ENCODE measurements at regions of chr5 and their contacts with region 1.

Region 1: GRCh38 chr5:128074171-128074570 is 9.4 kb upstream of the SLC12A2 start:
- DNase-seq: no peak
- H3K4me3 ChIP-seq: no peak overlapping the region
- H3K27me3 ChIP-seq: no peaks in the 10 kb centered on the region
- CTCF ChIP-seq: no peak

Region 2: GRCh38 chr5:128037027-128037426 is 37.1 kb before region 1 on chr5:
- CTCF ChIA-PET with region 1: no interaction called
- POLR2A ChIA-PET with region 1: interaction called, 10 read pairs
- DNase-seq: no peak
- H3K4me3 ChIP-seq: no peak overlapping the region
- H3K27me3 ChIP-seq: no peaks in the 10 kb centered on the region
- CTCF ChIP-seq: no peak

Region 3: GRCh38 chr5:128426090-128426534 is 351.9 kb after region 1 on chr5:
- CTCF ChIA-PET with region 1: no interaction called
- POLR2A ChIA-PET with region 1: no interaction called
- DNase-seq: no peak
- H3K4me3 ChIP-seq: no peak overlapping the region
- H3K27me3 ChIP-seq: no peaks in the 10 kb centered on the region
- CTCF ChIP-seq: no peak

Measured in BJ (cell line).